MCF 10A (cell line): ENCODE measurements at regions of chr21 and their contacts with region 1.

Region 1: DNA sequence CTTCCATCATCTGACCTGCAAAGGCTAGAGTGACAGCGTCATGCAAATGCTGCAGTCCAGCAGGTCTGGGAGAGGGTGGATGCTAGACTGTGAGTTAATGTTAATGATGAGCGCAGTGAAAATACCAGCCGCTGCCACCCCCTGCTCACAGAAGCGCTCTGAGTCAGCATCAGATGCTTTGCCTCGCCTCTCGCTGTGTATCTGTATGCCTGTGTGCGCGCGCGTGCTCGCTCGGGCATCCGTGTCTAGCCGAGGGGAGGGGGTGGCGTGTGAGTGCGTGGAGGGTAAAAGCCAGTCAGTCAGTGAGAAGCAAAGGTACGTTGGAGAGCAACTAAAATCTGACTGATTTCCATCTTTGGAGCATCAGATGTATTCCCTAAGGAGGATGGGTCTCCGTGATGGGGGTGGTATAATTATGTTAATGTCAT is 858.7 kb downstream of the USP25 start:
- DNase-seq: peak; percentile 79
- H3K4me3 Mint-ChIP-seq: no peak overlapping the region
- H3K27ac Mint-ChIP-seq: no peak overlapping the region
- H3K4me1 Mint-ChIP-seq: peaks cover 4% of the 10 kb centered on the region
- H3K27me3 Mint-ChIP-seq: no peaks in the 10 kb centered on the region
- CTCF ChIP-seq: no peak

Region 2: DNA sequence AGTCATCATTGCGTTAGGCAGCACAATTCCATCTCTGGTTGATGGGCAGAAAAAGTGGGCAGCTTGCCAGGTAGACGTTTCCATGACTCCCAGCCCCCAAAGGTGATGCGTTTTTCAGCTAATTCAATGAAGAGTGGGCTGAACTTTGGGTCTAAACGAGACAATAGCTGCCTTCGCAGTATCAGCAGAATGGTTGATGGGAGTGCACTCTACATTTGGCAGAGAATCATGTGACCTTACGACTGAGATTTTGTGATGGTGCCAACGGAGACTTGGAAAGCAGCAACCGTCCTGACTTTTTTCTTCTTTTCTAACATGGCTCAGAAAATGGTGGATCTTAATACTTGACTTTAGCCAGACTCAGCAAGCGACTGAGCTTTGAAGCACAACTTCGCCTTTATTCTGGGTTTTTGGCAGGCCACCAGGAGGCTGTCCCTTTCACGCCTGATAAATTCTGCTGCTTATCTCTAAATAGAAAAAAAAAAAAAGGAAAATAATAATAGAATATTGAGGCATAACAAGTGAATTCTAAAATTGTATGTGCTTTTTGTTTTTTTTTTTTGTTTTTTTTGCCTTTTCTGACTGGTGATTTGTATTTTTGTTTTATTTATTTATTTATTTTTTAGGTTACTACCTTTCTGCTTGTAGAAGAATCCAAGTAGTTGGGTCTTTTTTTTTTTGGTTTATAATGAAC is 53.9 kb before region 1 on chr21:
- CTCF ChIA-PET with region 1: no interaction called
- POLR2A ChIA-PET with region 1: interaction called, 17 read pairs
- intact Hi-C with region 1: no loop called
- DNase-seq: no peak
- H3K4me3 Mint-ChIP-seq: no peak overlapping the region
- H3K27ac Mint-ChIP-seq: no peak overlapping the region
- H3K4me1 Mint-ChIP-seq: peaks cover 16% of the 10 kb centered on the region
- H3K27me3 Mint-ChIP-seq: no peaks in the 10 kb centered on the region
- CTCF ChIP-seq: no peak

Region 3: DNA sequence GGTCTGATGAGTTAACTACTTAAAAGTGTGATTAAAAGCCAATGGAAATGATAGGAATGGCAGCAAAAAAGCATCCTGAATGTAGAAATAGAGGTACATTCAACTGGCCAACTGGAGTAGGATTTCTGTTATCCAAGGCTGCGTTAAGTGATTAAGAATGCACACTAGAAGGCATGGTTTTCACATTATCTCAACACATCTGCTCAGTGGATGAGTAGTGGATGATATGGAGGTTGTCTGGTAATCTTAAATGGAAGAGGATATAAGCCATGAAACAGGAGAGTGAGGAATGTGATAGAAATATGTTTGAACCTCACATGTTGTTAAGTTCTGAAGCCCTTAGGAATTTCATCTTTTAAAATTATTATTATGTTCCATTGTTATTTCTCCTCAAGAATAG is 18.8 kb before region 1 on chr21:
- CTCF ChIA-PET with region 1: no interaction called
- POLR2A ChIA-PET with region 1: interaction called, 16 read pairs
- intact Hi-C with region 1: no loop called
- DNase-seq: no peak
- H3K4me3 Mint-ChIP-seq: no peak overlapping the region
- H3K27ac Mint-ChIP-seq: peak overlapping the region; percentile 63
- H3K4me1 Mint-ChIP-seq: peaks cover 21% of the 10 kb centered on the region
- H3K27me3 Mint-ChIP-seq: no peaks in the 10 kb centered on the region
- CTCF ChIP-seq: no peak